ENCODE measurements at regions of chr20 and their contacts with region 1.

Region 1: DNA sequence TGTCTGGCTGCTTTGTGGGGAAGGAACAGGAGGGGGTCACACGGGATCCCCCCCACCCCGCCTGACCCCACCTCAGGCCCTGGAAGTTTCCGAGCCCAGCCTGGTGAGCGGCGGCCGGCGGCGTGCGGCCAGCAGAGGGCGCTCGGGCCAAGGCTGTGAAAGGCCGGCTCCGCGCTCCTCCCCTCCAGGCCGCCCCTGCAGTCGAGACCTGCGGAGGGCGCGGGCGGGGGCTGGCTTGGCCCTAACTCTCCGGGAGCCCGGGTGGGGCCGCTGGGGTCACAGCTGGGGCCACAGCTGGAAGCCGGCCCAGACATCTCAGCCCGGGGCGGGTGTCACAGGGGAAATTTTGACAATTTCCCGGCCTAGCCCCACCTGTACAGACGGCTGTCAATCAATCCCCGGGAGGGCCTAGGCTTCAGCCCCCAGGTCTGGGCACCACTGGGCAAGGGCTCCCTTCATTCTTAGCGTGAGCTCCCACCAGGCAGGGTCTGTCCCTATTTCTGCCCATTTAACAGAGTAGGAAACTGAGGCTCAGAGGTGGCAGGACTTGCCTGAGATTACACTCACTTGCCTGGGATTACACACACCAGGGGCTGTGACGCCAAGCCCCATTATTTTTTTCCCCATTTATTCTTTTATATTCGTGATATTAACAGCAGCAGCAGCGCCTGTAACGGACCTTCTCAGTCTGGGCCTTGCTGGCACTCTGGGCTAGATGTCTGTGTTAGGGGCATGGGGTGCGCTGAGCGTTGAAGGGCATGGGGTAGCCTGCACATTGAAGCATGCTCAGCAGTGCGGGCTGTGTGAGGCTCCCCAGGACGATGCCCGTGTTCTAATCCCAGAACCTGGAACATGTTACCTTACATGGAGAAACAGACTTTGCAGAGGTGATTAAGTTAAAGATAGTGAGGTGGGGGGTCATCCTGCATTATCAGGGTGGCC is 23.0 kb downstream of the ZBP1 start:
- DNase-seq: peak; percentile 53 to 89 (median 75)
- ATAC-seq: peak; percentile 94
- H3K4me3 ChIP-seq: peak overlapping the region; percentile 9 to 29
- H3K4me3 Mint-ChIP-seq: no peak overlapping the region
- H3K27ac ChIP-seq: no peak overlapping the region
- H3K27ac Mint-ChIP-seq: no peak overlapping the region
- H3K4me1 ChIP-seq: peaks cover 8% of the 10 kb centered on the region
- H3K4me1 Mint-ChIP-seq: peaks cover 6% of the 10 kb centered on the region
- H3K27me3 ChIP-seq: peaks cover 0 to 3% of the 10 kb centered on the region in 2 experiments
- H3K27me3 Mint-ChIP-seq: peaks cover 2% of the 10 kb centered on the region
- CTCF ChIP-seq: peak; percentile 81

Region 2: DNA sequence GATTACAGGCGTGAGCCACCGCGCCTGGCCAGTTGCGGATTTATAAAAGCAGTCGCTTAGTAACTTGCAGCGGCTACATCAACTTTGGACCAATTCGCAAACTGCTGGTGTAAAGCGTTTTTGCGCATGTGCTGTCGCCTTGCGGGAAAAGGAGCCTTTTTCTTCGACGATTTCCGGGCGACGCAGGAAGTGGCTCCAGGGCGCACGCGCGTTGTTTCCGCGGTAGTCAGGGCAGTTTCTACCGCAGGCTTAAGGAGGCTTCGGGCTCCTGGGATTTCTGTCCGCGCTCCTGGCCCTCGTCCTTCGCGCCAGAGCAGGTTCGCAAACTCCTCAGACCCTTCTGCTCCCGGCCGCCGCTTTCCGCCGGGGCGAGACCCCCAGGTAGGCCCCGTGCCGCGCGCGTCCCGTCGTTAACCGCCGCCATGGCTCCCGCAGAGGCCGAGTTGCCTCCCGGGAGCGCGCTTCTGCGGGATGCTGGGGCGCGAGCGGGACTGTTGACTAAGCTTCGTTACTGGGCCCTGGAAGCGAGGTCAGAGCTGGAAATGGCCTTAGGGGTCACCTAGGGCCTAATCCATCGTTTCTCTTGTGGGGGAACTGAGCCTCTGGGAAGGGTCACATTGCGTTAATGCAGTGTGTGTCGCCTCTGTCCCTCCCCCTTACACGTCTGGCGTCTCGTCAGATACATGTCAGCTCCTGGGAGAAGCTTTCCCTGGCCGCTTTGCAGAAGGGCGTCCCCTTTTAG is 246.1 kb before region 1 on chr20 and contains the start of gene RAE1:
- CTCF ChIA-PET with region 1: no interaction called
- POLR2A ChIA-PET with region 1: interaction called, 3 read pairs
- intact Hi-C with region 1: loop called in 1 of 2 experiments (anchors 10 kb)
- DNase-seq: peak; percentile 80 to 97 (median 92)
- ATAC-seq: peak; percentile 86
- H3K4me3 ChIP-seq: peak within 1 kb of the TSS; percentile 78 to 97
- H3K4me3 Mint-ChIP-seq: peak within 1 kb of the TSS; percentile 90
- H3K27ac ChIP-seq: peak within 1 kb of the TSS; percentile 78 to 84
- H3K27ac Mint-ChIP-seq: peak within 1 kb of the TSS; percentile 92
- H3K4me1 ChIP-seq: peaks cover 23% of the 10 kb centered on the region
- H3K4me1 Mint-ChIP-seq: peaks cover 27% of the 10 kb centered on the region
- H3K27me3 ChIP-seq: no peaks in the 10 kb centered on the region
- H3K27me3 Mint-ChIP-seq: no peaks in the 10 kb centered on the region
- CTCF ChIP-seq: no peak
- total RNA-seq, gene RAE1: 58.9 to 59.4 TPM

Region 3: DNA sequence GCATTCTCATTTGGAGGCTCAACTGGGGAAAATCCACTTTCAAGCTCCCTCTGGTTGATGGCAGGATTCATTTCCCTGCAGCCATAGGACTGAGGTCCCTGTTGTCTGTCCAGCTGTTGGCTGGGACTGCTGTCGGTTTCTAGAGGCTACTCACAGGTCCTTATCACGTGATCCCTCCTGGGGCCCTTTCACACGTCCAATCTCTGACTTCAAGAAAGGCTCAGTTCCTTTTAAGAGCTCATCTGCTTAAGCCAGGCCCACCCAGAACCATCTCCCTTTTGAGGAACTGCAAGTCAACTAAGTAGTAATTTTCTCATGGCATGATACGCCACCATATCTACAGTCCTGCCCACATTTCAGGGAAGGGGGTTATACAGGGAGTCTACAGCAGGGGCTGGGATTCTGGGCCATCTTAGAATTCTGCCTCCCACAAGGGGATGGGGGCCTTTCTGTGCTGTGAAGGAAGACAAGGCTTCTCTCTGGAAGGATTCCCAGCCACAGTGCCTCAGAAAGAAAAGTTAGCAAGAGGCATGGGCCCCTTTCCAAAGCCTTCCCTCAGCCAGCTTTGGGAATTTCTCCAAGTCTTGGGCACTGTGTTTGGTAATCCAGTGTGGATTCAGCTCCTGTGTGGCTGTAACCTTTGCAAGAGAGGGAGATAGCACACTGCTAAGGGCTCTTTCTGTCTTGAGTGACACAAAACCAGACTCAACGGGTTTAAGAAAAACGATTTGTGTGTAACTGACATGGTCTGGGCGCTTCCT is 138.7 kb before region 1 on chr20:
- CTCF ChIA-PET with region 1: no interaction called
- POLR2A ChIA-PET with region 1: no interaction called
- intact Hi-C with region 1: no loop called
- DNase-seq: no peak
- ATAC-seq: no peak
- H3K4me3 ChIP-seq: no peak overlapping the region
- H3K4me3 Mint-ChIP-seq: no peak overlapping the region
- H3K27ac ChIP-seq: no peak overlapping the region
- H3K27ac Mint-ChIP-seq: no peak overlapping the region
- H3K4me1 ChIP-seq: no peaks in the 10 kb centered on the region
- H3K4me1 Mint-ChIP-seq: no peaks in the 10 kb centered on the region
- H3K27me3 ChIP-seq: no peaks in the 10 kb centered on the region
- H3K27me3 Mint-ChIP-seq: no peaks in the 10 kb centered on the region
- CTCF ChIP-seq: no peak

Region 4: DNA sequence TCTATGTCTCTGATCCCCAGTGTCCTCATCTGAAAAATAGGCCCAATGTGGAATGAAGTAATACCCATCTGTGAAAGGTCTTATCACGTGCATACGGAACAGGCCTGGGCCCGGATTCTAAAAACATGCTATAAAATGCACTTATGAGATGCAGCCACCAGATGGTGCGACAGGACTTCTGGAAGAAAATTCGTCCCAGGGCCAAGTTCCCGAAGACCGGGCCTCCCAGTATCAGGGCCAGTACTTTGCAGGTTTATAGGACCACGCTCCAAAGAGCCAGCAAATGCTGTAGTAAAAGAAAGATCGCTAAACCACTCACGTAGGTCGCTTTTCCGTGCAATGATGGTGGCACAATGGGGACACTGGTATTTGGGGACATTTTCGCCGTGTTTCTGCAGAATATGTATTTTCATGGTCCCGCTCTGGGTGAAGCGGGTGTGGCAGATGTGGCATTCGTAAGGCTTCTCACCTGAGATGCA is 83.0 kb before region 1 on chr20:
- CTCF ChIA-PET with region 1: interaction called, 8 read pairs
- POLR2A ChIA-PET with region 1: interaction called, 3 read pairs
- intact Hi-C with region 1: loop called (anchors 1 to 5 kb)
- DNase-seq: peak in 5 of 9 experiments; percentile 19 to 52 (median 32)
- ATAC-seq: no peak
- H3K4me3 ChIP-seq: no peak overlapping the region
- H3K4me3 Mint-ChIP-seq: no peak overlapping the region
- H3K27ac ChIP-seq: no peak overlapping the region
- H3K27ac Mint-ChIP-seq: no peak overlapping the region
- H3K4me1 ChIP-seq: no peaks in the 10 kb centered on the region
- H3K4me1 Mint-ChIP-seq: no peaks in the 10 kb centered on the region
- H3K27me3 ChIP-seq: no peaks in the 10 kb centered on the region
- H3K27me3 Mint-ChIP-seq: peaks cover 14% of the 10 kb centered on the region
- CTCF ChIP-seq: no peak

Region 5: DNA sequence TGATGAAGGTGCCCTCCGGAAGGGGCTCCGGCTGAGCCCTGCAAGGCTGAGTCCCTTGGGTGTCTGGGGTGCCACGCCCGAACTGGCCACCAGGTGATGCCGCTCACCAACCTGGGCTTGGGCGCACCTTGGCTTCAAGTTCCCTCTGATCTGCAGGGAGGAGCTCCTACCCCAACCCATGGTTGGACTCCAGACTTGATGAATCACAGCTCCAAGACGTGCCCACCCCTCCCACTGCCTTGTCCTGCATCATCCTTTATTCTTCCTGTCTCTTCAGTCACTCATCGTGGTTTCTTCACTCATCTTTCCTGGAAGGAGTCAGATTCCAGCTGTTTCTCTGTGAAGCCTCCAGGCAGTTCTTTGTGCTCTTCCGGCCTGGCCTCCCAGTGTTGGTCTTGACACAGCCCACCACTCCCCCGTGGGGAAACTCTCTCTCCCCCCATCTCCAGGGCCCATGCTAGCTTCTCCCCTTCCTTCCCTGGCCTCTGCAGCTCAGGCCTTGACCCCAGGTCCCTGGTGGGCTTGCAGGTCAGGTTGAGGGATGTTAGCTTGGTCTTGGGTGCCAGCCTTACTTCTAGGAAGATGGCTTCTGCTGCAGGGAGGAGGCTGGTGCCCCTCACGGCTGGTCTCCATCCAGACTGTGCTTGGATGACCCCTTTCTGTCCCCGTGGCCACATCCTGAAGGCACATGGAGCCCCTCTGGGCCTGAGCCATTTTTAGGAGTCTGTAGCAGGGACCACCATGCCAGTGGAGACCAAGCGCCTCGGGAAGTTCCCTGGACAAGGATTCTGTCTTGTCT is 25.5 kb after region 1 on chr20:
- CTCF ChIA-PET with region 1: interaction called, 78 read pairs
- POLR2A ChIA-PET with region 1: interaction called, 4 read pairs
- intact Hi-C with region 1: loop called in 1 of 2 experiments (anchors 2 kb)
- DNase-seq: peak; percentile 52 to 80 (median 76)
- ATAC-seq: peak; percentile 34
- H3K4me3 ChIP-seq: no peak overlapping the region
- H3K4me3 Mint-ChIP-seq: peak overlapping the region; percentile 57
- H3K27ac ChIP-seq: no peak overlapping the region
- H3K27ac Mint-ChIP-seq: peak overlapping the region; percentile 84
- H3K4me1 ChIP-seq: peaks cover 73% of the 10 kb centered on the region
- H3K4me1 Mint-ChIP-seq: peaks cover 78% of the 10 kb centered on the region
- H3K27me3 ChIP-seq: no peaks in the 10 kb centered on the region
- H3K27me3 Mint-ChIP-seq: no peaks in the 10 kb centered on the region
- CTCF ChIP-seq: peak; percentile 72

Region 6: DNA sequence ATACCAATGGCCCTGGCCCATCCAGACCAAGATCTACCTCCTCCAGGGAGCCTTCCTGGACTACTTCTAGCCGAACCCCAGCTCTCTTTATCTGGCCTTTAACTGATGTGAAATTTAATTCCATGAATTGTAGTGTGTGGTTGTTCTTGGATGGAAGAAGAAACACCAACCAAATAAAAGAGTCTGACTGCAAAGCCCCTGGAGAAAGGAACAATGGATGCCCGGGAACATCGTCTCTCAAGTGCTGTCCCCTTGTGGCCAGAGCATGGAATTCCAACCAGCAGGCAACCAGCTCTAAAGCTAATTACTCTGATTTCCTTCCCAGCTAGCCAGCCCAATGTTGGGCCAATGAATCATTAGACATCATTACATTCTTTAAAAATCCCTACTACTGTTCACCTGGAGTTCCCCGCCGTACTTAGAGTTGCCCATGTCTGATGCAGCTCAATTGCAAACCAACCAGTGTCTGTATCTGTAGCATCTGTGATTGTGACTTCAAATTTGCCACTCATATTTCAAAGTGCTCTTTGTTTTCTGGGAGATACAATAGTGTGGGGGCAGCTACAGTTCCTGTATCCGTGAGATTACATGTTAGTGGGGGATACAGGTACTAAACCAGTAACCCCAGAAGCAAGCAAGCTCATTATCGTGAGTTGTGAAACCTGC is 490.1 kb after region 1 on chr20:
- CTCF ChIA-PET with region 1: no interaction called
- POLR2A ChIA-PET with region 1: no interaction called
- intact Hi-C with region 1: loop called (anchors 2 to 5 kb)
- DNase-seq: peak in 3 of 9 experiments; percentile 6 to 44 (median 17)
- ATAC-seq: no peak
- H3K4me3 ChIP-seq: no peak overlapping the region
- H3K4me3 Mint-ChIP-seq: no peak overlapping the region
- H3K27ac ChIP-seq: no peak overlapping the region
- H3K27ac Mint-ChIP-seq: no peak overlapping the region
- H3K4me1 ChIP-seq: no peaks in the 10 kb centered on the region
- H3K4me1 Mint-ChIP-seq: no peaks in the 10 kb centered on the region
- H3K27me3 ChIP-seq: no peaks in the 10 kb centered on the region
- H3K27me3 Mint-ChIP-seq: peaks cover 14% of the 10 kb centered on the region
- CTCF ChIP-seq: peak; percentile 24

Region 7: GRCh38 chr20:59299944-59300331 is 1702.7 kb after region 1 on chr20:
- CTCF ChIA-PET with region 1: no interaction called
- POLR2A ChIA-PET with region 1: no interaction called
- intact Hi-C with region 1: no loop called
- DNase-seq: no peak
- ATAC-seq: no peak
- H3K4me3 ChIP-seq: no peak overlapping the region
- H3K4me3 Mint-ChIP-seq: peak overlapping the region; percentile 22
- H3K27ac ChIP-seq: no peak overlapping the region
- H3K27ac Mint-ChIP-seq: no peak overlapping the region
- H3K4me1 ChIP-seq: peaks cover 7% of the 10 kb centered on the region
- H3K4me1 Mint-ChIP-seq: peaks cover 22% of the 10 kb centered on the region
- H3K27me3 ChIP-seq: peaks cover 2 to 6% of the 10 kb centered on the region in 2 experiments
- H3K27me3 Mint-ChIP-seq: peaks cover 38% of the 10 kb centered on the region
- CTCF ChIP-seq: no peak

Measured in CD8-positive, alpha-beta T cell (primary cell).